CD4-positive, alpha-beta memory T cell (primary cell): ENCODE measurements at regions of chr20 and their contacts with region 1.

Region 1: DNA sequence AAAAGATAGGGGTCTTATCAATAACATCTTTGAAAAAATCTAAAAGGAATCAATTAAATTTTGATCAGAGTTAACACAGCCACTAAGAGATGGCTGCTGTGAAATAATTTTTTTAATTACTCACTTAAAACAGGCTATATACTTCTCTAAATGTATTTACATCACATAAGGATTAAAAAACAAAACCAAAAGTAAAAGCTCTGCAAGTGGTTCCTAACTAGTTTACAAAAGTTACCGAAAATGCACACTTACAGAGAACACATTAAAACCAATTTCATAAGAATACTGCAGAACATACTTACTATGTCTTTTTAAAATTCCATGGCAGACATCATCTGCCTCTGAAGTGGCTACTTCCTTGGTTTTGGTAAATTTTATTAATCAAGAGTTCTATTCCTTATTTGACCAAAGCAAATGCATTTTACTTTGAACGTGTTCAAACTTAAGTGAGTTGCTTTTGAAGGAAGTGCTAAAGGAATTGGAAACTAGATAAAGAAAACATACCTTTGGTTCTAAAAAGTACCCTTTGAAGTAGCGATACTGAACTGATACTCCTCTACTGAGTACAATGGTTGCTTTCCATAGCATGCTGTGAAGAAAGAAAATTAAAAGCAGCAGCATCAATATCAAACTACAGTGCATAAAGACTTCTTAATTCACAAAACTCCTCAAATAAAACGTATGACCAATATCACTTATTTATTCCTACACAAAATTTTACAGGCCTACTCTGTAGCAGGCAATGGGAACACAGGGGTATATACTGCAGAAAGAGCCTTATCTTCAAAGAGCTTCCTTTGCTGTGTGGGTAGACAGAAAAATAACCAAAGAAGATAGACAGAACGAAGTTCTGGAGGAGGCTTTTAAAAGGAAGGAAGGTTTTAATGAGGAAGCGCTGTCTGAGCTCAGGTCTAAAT is 157.1 kb upstream of the SHLD1 start:
- DNase-seq: peak in 2 of 5 donors; percentile 16 to 33
- H3K4me3 ChIP-seq: peak overlapping the region in 1 of 2 donors; percentile 23
- H3K4me3 Mint-ChIP-seq: peak overlapping the region; percentile 47 to 84 (median 76)
- H3K27ac ChIP-seq: peak overlapping the region; percentile 61
- H3K27ac Mint-ChIP-seq: peak overlapping the region; percentile 76 to 96 (median 93)
- H3K4me1 ChIP-seq: peaks cover 74% of the 10 kb centered on the region
- H3K4me1 Mint-ChIP-seq: peaks cover 38 to 78% (median 44%) of the 10 kb centered on the region in 4 donors
- H3K27me3 ChIP-seq: no peaks in the 10 kb centered on the region
- H3K27me3 Mint-ChIP-seq: no peaks in the 10 kb centered on the region

Region 2: DNA sequence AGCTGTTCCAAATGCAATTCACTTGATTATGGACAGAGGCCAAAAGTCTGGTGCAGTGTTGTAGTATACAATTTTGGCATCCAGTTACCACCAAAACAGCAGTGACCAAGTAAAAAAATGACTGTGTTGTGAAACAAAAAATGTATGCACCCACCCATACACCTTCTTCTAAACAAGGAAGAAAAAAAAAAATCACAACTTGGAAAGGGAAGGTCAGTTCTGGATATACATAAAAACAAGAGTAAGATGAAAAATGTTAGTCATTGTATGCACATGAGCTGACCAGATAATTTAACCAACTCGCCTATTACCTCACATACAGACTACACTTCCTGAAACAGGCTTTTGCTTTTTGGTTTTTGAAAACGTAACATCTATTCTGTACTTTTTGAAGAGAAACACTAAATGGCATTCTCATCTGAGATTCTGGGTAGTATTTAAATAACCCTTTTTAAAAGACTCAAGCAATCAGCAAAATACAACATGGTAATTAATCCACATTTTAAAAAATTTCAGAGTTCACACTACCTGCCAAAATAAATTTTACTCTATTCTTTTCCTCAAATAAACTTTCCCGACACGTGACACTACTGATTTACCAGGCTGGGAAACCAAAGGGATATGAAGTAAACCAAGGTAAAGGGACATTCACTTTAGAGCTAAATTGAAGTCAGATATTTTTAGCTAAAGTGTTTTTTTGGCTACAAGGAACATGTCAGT is 15.5 kb after region 1 on chr20:
- CTCF ChIA-PET with region 1: interaction called, 4 read pairs
- POLR2A ChIA-PET with region 1: interaction called, 10 read pairs
- intact Hi-C with region 1: loop called (anchors 1 kb)
- DNase-seq: no peak
- H3K4me3 ChIP-seq: peak overlapping the region; percentile 96 to 98
- H3K4me3 Mint-ChIP-seq: peak overlapping the region; percentile 90 to 100 (median 98)
- H3K27ac ChIP-seq: peak overlapping the region; percentile 98
- H3K27ac Mint-ChIP-seq: peak overlapping the region; percentile 99 to 100 (median 99)
- H3K4me1 ChIP-seq: peaks cover 62% of the 10 kb centered on the region
- H3K4me1 Mint-ChIP-seq: peaks cover 36 to 66% (median 49%) of the 10 kb centered on the region in 4 donors
- H3K27me3 ChIP-seq: no peaks in the 10 kb centered on the region
- H3K27me3 Mint-ChIP-seq: peaks cover 0 to 2% of the 10 kb centered on the region in 2 donors